ENCODE measurements at regions of chr4 and their contacts with region 1.

Region 1: GRCh38 chr4:133148690-133149363 is at the start of gene PCDH10:
- DNase-seq: peak; percentile 98
- H3K4me3 ChIP-seq: peak within 1 kb of the TSS; percentile 72 to 90 (median 77)
- H3K27ac ChIP-seq: peak within 1 kb of the TSS; percentile 67
- H3K4me1 ChIP-seq: peaks cover 33% of the 10 kb centered on the region
- H3K27me3 ChIP-seq: no peaks in the 10 kb centered on the region
- CTCF ChIP-seq: no peak
- POLR2A ChIP-seq: peak; percentile 96
- total RNA-seq, gene PCDH10: 56.5 and 91.7 TPM in 2 replicates

Region 2: DNA sequence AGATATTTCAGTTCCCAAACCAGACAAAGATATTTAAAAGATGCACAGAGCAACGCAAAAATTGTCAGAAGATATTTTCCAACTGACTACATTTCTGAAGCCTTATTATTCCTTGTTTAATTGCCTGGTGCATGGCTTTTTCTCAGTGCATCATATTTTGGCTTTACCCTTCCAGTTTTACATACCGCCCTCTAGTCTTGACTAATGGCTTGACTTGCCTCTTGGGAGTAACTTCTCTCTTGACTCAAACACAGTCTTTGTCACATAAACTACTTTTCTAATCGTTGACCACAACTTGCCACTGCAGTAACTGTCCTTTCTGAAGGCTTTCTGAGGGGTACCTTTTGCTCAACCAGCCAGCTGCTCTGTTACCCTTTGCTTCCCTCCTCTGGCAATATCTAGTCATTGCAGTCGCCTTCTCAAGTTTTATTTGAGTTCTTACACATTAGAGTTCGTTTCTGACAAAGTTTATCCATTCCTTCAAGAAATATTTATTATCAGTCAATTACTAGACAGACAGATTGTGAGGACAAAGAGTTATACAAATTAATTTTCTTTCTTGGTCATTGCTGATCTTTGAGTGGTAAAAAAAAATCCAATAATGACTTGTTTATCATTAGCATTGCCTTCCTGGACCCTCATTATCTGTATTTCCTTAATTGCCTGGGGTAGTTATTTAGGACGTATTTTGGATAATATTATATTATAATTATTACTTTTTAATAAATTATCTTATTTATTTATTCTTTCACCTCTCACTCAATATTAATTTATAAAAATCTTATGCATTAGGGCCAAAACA is 506.6 kb before region 1 on chr4:
- CTCF ChIA-PET with region 1: interaction called, 7 read pairs
- POLR2A ChIA-PET with region 1: no interaction called
- dilution Hi-C with region 1: no loop called
- intact Hi-C with region 1: loop called (anchors 2 kb)
- DNase-seq: peak; percentile 74
- H3K4me3 ChIP-seq: no peak overlapping the region
- H3K27ac ChIP-seq: no peak overlapping the region
- H3K4me1 ChIP-seq: no peaks in the 10 kb centered on the region
- H3K27me3 ChIP-seq: peaks cover 0 to 1% of the 10 kb centered on the region in 2 experiments
- CTCF ChIP-seq: peak; percentile 76 to 77
- POLR2A ChIP-seq: no peak

Region 3: DNA sequence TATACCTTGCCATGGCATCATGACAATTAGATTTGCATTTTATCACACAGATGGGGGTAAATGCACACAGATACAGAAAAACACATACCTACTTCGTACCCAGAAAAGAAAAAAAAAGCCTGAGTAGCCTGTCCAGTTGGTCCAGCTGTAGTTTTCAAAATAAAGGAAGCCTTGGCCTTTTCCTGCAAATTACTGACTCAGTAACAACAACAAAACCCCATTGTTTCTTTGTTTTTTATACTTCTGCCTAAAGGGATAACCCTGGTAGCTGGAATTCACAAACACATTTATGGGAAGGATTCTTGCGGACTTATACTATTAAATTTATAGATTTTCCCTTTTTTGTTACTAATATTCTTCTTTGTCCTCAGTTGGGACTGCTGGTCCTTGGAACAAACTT is 156.1 kb before region 1 on chr4:
- CTCF ChIA-PET with region 1: interaction called, 15 read pairs
- POLR2A ChIA-PET with region 1: interaction called, 14 read pairs
- dilution Hi-C with region 1: no loop called
- intact Hi-C with region 1: loop called (anchors 5 kb)
- DNase-seq: peak; percentile 95
- H3K4me3 ChIP-seq: peak overlapping the region in 1 of 3 experiments; percentile 36
- H3K27ac ChIP-seq: peak overlapping the region; percentile 98
- H3K4me1 ChIP-seq: peaks cover 38% of the 10 kb centered on the region
- H3K27me3 ChIP-seq: no peaks in the 10 kb centered on the region
- CTCF ChIP-seq: no peak
- POLR2A ChIP-seq: no peak

Region 4: GRCh38 chr4:133137571-133137970 is 11.3 kb before region 1 on chr4:
- CTCF ChIA-PET with region 1: interaction called, 26 read pairs
- POLR2A ChIA-PET with region 1: interaction called, 3 read pairs
- dilution Hi-C with region 1: no loop called
- intact Hi-C with region 1: no loop called
- DNase-seq: peak; percentile 56
- H3K4me3 ChIP-seq: no peak overlapping the region
- H3K27ac ChIP-seq: no peak overlapping the region
- H3K4me1 ChIP-seq: no peaks in the 10 kb centered on the region
- H3K27me3 ChIP-seq: no peaks in the 10 kb centered on the region
- CTCF ChIP-seq: no peak
- POLR2A ChIP-seq: no peak

Region 5: DNA sequence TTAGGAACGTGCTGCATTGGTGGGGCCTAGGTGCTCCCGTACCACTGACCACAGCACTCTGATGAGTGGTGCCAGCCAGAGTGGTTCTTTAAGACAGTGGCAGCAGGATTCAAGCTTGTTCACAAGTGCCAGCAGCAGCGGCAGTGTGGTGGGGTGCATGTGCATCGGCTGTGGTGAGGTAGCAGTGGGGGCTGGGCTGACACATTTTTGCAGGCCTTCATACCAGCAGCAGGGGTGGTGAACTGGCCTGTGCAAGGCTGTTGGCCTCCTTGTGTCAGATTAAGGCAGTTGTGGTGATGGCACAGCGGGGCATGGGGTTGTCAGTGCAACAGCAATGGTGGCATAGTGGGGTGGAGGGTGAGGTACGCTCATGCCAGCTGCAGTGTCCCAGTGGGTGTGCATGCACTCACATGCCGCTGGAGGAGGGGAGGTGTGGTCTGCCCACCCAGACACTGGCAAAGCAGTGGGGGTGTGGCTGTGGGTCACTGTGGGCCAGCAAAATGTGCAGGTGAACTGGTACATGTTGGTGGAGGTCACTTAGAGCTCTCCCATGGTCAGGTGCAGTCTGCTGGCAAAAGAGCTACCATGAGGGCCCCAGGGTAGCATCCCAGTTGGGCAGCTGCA is 921.5 kb after region 1 on chr4:
- CTCF ChIA-PET with region 1: interaction called, 6 read pairs
- POLR2A ChIA-PET with region 1: no interaction called
- dilution Hi-C with region 1: no loop called
- intact Hi-C with region 1: loop called (anchors 5 kb)
- DNase-seq: no peak
- H3K4me3 ChIP-seq: no peak overlapping the region
- H3K27ac ChIP-seq: no peak overlapping the region
- H3K4me1 ChIP-seq: no peaks in the 10 kb centered on the region
- H3K27me3 ChIP-seq: no peaks in the 10 kb centered on the region
- CTCF ChIP-seq: no peak
- POLR2A ChIP-seq: no peak

Region 6: DNA sequence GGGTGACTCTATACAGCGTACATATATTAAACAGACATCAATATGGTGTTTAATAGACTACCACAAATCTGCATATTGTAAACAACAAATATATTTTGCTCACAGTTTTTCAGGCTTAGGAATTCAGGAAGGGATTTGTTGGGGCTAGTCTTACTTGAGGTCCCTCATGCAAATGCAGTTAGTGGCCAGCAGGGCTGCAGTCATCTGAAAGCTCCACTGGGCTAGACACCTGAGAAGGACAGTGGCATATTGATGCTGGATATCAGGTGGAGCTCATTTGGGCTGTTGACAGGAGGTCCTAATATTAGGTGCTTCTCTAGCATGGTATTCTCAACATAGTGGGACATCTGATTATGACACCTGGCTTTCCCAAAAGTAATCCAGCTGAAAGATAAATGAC is 1546.6 kb after region 1 on chr4:
- CTCF ChIA-PET with region 1: no interaction called
- POLR2A ChIA-PET with region 1: no interaction called
- dilution Hi-C with region 1: no loop called
- intact Hi-C with region 1: no loop called
- DNase-seq: no peak
- H3K4me3 ChIP-seq: no peak overlapping the region
- H3K27ac ChIP-seq: no peak overlapping the region
- H3K4me1 ChIP-seq: no peaks in the 10 kb centered on the region
- H3K27me3 ChIP-seq: no peaks in the 10 kb centered on the region
- CTCF ChIP-seq: no peak
- POLR2A ChIP-seq: no peak

Region 7: GRCh38 chr4:134777606-134778005 is 1628.8 kb after region 1 on chr4:
- CTCF ChIA-PET with region 1: interaction called, 55 read pairs
- POLR2A ChIA-PET with region 1: no interaction called
- dilution Hi-C with region 1: no loop called
- intact Hi-C with region 1: loop called (anchors 1 kb)
- DNase-seq: peak; percentile 64
- H3K4me3 ChIP-seq: no peak overlapping the region
- H3K27ac ChIP-seq: no peak overlapping the region
- H3K4me1 ChIP-seq: peaks cover 2% of the 10 kb centered on the region
- H3K27me3 ChIP-seq: no peaks in the 10 kb centered on the region
- CTCF ChIP-seq: peak in 1 of 2 donors; percentile 13
- POLR2A ChIP-seq: no peak

Measured in endothelial cell of umbilical vein (primary cell).